CD4-positive, alpha-beta T cell (primary cell): ENCODE measurements at regions of chr16 and their contacts with region 1.

Region 1: DNA sequence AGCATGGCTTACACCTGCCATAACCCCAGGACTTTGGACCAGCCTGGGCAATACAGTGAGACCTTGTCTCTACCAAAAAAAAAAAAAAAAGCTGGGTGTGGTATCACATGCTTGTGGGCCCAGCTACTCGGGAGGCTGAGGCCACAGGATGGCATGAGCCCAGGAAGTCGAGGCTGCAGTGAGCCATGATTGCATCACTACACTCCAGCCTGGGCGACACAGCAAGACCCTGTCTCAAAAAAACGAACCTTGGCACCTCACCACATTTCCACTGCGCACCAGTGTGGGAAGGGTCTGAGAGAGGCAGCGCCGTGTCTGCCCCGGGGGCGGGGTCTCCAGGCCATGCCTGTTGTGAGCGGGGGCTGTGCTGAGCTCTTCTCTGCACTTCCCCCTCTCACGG is 6.3 kb downstream of the ACSF3 start:
- DNase-seq: peak in 2 of 14 experiments; percentile 27 to 57
- ATAC-seq: no peak
- H3K4me3 ChIP-seq: no peak overlapping the region
- H3K4me3 Mint-ChIP-seq: peak overlapping the region; percentile 58
- H3K27ac ChIP-seq: no peak overlapping the region
- H3K27ac Mint-ChIP-seq: peak overlapping the region; percentile 99
- H3K4me1 ChIP-seq: peaks cover 82% of the 10 kb centered on the region
- H3K4me1 Mint-ChIP-seq: peaks cover 78% of the 10 kb centered on the region
- H3K27me3 ChIP-seq: no peaks in the 10 kb centered on the region
- H3K27me3 Mint-ChIP-seq: no peaks in the 10 kb centered on the region
- CTCF ChIP-seq: no peak

Region 2: GRCh38 chr16:89009311-89010209 is 90.3 kb before region 1 on chr16:
- CTCF ChIA-PET with region 1: no interaction called
- POLR2A ChIA-PET with region 1: no interaction called
- intact Hi-C with region 1: no loop called
- DNase-seq: peak in 8 of 14 experiments; percentile 16 to 69 (median 24)
- ATAC-seq: peak; percentile 39
- H3K4me3 ChIP-seq: no peak overlapping the region
- H3K4me3 Mint-ChIP-seq: no peak overlapping the region
- H3K27ac ChIP-seq: no peak overlapping the region
- H3K27ac Mint-ChIP-seq: no peak overlapping the region
- H3K4me1 ChIP-seq: no peaks in the 10 kb centered on the region
- H3K4me1 Mint-ChIP-seq: no peaks in the 10 kb centered on the region
- H3K27me3 ChIP-seq: peaks cover 18 to 26% of the 10 kb centered on the region in 2 experiments
- H3K27me3 Mint-ChIP-seq: peaks cover 32% of the 10 kb centered on the region
- CTCF ChIP-seq: no peak

Region 3: DNA sequence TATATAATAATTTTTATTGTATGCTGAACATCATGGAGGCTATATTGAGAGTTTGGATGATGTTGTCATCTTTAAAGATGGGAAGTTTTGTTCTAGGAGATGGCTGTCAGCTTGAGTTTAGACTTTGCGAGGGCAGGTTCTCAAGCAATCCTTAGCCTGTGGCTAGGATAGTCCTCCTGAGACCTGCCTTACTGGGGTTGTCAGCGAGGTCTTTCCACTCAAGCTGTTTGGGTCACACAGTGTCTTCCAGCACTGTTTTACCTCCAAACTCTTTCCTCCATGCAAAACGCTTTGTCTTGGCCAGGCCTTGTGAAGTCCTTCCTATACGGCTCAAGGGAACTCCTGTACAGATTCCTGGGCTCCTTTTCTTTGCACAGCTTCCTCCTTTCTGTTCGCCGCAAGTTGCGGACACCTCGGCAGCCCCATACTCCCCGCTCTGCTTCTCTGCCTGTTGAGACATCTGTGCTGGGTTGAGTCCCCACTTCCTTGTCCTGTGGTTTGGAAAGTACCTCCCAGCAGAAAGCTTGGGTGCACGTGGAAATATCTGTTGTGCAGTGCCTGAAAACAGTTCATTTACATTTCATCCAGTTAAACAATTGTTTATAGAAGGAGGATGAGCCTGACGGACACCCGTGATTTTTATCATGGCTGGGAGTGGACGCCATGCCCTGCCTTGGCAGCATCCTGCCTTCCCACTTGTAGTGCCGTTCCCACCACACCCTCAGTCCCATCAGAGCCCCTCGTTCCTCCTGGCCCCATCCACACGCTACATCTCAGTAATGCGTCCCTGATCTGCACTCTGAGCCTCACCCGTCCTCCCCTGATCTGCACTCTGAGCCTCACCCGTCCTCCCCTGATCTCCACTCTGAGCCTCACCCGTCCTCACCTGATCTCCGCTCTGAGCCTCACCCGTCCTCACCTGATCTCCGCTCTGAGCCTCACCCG is 67.9 kb before region 1 on chr16:
- CTCF ChIA-PET with region 1: no interaction called
- POLR2A ChIA-PET with region 1: interaction called, 13 read pairs
- intact Hi-C with region 1: loop called in 1 of 2 experiments (anchors 5 kb)
- DNase-seq: peak; percentile 34 to 88 (median 54)
- ATAC-seq: peak; percentile 97
- H3K4me3 ChIP-seq: peak overlapping the region; percentile 32
- H3K4me3 Mint-ChIP-seq: peak overlapping the region; percentile 43
- H3K27ac ChIP-seq: peak overlapping the region; percentile 16 to 62
- H3K27ac Mint-ChIP-seq: peak overlapping the region; percentile 69
- H3K4me1 ChIP-seq: peaks cover 44% of the 10 kb centered on the region
- H3K4me1 Mint-ChIP-seq: peaks cover 42% of the 10 kb centered on the region
- H3K27me3 ChIP-seq: no peaks in the 10 kb centered on the region
- H3K27me3 Mint-ChIP-seq: no peaks in the 10 kb centered on the region
- CTCF ChIP-seq: no peak

Region 4: GRCh38 chr16:89122322-89122851 is 22.5 kb after region 1 on chr16:
- CTCF ChIA-PET with region 1: interaction called, 4 read pairs
- POLR2A ChIA-PET with region 1: interaction called, 27 read pairs
- intact Hi-C with region 1: loop called in 1 of 2 experiments (anchors 1 kb)
- DNase-seq: peak; percentile 63 to 88 (median 83)
- ATAC-seq: peak; percentile 95
- H3K4me3 ChIP-seq: peak overlapping the region; percentile 9
- H3K4me3 Mint-ChIP-seq: peak overlapping the region; percentile 77
- H3K27ac ChIP-seq: peak overlapping the region in 1 of 2 donors; percentile 44
- H3K27ac Mint-ChIP-seq: peak overlapping the region; percentile 97
- H3K4me1 ChIP-seq: peaks cover 54% of the 10 kb centered on the region
- H3K4me1 Mint-ChIP-seq: peaks cover 61% of the 10 kb centered on the region
- H3K27me3 ChIP-seq: no peaks in the 10 kb centered on the region
- H3K27me3 Mint-ChIP-seq: no peaks in the 10 kb centered on the region
- CTCF ChIP-seq: no peak